Ovary (tissue), 10 donors: ENCODE measurements at regions of chr6 and their contacts with region 1.

Region 1: DNA sequence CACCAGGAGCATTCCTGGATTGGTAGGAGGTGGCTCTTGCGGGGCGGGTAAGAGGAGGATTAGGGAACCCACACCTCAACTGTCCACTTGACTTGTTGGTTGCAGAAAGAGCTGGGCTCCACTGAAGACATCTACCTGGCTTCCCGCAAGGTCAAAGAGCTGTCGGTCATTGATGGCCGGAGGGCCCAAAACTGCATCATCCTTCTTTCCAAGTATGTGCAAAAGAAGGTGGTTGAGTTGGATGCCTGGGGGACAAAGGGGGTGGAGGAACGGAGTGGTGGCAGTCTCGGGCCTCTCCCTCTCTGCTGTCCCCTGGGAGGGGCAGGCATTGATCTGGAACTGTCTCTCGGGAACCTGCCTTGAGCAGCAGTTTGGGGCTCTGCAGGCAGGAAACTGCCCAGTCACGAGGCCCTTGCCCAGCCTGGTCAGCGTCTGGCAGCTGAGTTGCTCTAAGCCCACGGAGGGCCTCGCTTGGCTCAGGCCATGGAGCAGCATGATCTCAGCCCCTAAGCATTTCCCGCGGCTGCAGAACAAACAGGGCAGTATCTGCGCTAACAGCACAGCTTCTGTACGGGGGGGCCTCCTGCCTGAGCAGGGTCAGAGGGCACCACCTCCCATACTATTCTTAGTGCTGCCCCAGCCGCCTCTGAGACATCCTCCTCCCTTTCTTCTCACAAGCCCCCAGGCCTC is 46.7 kb downstream of the MOCS1 start:
- DNase-seq: peak; percentile 72 to 85 (median 77)
- H3K4me3 ChIP-seq: no peak overlapping the region
- H3K27ac ChIP-seq: peak overlapping the region in 1 of 2 donors; percentile 57
- H3K4me1 ChIP-seq: peaks cover 14% of the 10 kb centered on the region
- H3K27me3 ChIP-seq: no peaks in the 10 kb centered on the region
- CTCF ChIP-seq: no peak
- EP300 ChIP-seq: no peak
- POLR2A ChIP-seq: no peak

Region 2: DNA sequence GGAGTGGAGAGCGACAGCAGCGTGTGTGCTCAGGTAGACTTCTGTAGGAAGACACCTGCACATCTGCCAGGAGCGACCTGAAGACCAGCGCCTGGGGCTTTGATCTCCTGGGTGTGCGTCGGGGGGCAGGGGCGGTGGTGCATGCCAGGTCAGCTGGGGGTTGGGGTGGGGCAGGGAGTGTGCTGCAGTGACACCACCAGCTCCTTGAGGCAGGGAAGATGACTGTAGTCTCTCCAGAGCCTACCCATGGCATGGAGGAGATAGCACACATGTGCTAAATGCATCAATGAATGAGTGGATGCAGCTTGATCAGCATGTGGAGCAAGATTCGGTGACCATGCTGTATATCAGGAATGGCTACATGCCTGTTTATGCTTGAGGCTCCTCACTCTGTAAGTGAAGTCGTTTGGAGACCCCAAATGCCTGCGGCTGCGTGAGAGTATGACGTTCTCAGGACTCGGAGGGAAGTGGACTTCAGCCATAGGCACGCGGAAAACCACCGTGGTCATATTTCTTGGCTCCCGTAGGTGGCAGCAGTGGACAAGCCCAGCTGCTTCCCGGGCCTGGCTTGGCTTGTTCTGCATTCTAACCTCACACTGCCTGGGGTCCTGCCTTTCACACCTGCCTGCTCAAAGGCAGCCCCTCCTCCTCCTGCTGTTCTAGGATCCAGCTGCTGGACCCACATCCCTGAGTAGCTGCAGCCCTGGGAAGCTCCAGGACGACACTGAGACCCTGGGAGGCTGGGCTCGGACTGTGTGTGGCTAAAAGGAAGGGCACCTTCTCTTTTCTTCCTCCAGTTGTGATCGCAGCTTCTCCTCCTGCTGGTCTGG is 525.7 kb before region 1 on chr6:
- intact Hi-C with region 1: loop called in 2 of 4 experiments (anchors 5 to 10 kb)
- DNase-seq: peak; percentile 53 to 73 (median 66)
- H3K4me3 ChIP-seq: no peak overlapping the region
- H3K27ac ChIP-seq: no peak overlapping the region
- H3K4me1 ChIP-seq: no peaks in the 10 kb centered on the region
- H3K27me3 ChIP-seq: no peaks in the 10 kb centered on the region
- CTCF ChIP-seq: peak; percentile 59 to 71 (median 59)
- EP300 ChIP-seq: no peak
- POLR2A ChIP-seq: no peak

Region 3: DNA sequence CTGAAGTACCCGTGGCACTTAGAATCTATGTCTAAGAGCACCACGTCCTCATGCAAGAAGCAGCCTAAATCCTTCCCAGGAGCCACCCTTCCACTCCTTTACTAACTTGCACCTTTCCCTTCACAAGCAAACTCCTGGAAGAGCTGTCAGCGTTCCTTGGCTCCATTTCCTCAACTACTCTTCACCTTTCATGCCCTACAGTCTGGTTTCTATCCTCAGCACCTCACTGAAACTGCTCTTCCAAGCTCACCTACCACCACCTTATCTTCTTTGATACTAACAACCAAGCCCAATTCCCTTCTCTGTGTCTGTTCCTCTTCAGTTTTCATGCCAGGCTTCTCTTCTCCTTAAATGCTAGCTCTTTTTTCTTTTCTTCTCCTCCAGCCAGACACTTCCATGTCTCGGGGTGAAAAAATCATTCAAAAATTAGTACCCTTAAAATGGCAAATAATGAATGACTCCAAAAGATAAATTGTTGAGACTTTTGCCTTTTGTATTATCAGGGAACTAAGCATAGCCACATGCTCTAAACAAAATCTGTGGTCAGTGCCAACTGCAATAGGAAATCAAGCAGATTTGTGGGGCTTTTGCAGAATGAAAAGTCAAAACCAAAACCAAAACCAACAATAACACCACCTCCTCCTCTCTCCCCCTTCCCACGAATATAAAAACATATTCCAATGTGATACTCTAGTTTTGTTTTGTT is 415.4 kb before region 1 on chr6:
- intact Hi-C with region 1: no loop called
- DNase-seq: no peak
- H3K4me3 ChIP-seq: no peak overlapping the region
- H3K27ac ChIP-seq: no peak overlapping the region
- H3K4me1 ChIP-seq: peaks cover 6% of the 10 kb centered on the region
- H3K27me3 ChIP-seq: no peaks in the 10 kb centered on the region
- CTCF ChIP-seq: no peak
- EP300 ChIP-seq: no peak
- POLR2A ChIP-seq: no peak

Region 4: GRCh38 chr6:39812853-39813533 is 74.5 kb before region 1 on chr6:
- intact Hi-C with region 1: loop called in 1 of 4 experiments (anchors 10 kb)
- DNase-seq: no peak
- H3K4me3 ChIP-seq: no peak overlapping the region
- H3K27ac ChIP-seq: no peak overlapping the region
- H3K4me1 ChIP-seq: peaks cover 21% of the 10 kb centered on the region
- H3K27me3 ChIP-seq: no peaks in the 10 kb centered on the region
- CTCF ChIP-seq: no peak
- EP300 ChIP-seq: no peak
- POLR2A ChIP-seq: no peak

Region 5: GRCh38 chr6:39961178-39961577 is 73.7 kb after region 1 on chr6:
- intact Hi-C with region 1: no loop called
- DNase-seq: peak in 2 of 5 donors; percentile 16 to 37
- H3K4me3 ChIP-seq: no peak overlapping the region
- H3K27ac ChIP-seq: peak overlapping the region in 1 of 2 donors; percentile 10
- H3K4me1 ChIP-seq: peaks cover 4% of the 10 kb centered on the region
- H3K27me3 ChIP-seq: no peaks in the 10 kb centered on the region
- CTCF ChIP-seq: no peak
- EP300 ChIP-seq: no peak
- POLR2A ChIP-seq: no peak